ENCODE measurements at regions of chr17 and their contacts with region 1.

Region 1: DNA sequence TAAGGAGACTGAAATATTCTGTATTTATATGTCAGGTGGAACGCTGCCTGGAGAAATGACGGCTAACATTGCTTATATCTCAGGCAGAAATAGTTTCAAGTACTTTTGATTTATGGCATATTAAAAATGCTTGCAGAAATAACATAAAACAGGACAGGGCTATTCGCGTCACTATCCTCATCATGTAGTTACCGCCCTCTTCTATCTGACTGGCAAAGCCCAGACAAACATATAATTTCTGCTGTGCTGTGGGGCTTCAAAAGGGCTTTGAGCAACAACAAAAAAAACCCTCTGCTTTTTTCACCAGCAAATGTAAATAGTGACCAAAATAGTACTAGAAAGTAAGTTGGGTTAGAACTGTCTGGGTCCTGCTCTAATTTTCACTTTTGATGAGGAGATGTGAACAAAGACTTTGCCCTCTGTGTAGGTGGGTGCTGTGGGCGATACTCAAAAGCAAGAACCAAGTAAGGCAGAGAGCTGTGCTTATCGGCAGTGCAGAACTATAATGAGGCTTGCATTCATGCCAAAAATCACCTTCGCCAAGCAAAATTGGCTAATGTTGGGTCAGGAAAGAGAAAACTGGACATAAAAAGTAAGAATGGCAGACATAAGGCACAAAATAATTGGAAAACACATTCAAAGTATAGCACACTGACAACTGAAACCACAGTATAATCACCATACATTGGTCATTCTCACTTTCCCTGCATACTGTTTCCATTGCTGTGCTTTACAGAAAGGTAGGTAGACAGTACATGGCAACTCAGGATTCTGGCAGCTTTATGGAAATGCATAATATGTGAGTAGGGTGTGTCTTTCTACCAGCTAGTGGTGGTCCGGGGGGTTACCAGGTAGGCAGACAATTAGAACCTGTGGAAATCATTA is 151.2 kb upstream of the AXIN2 start:
- DNase-seq: peak; percentile 81
- H3K4me3 ChIP-seq: peak overlapping the region in 2 of 4 donors; percentile 12 to 25
- H3K27ac ChIP-seq: peak overlapping the region; percentile 56 to 84 (median 69)
- H3K4me1 ChIP-seq: peaks cover 0 to 26% (median 23%) of the 10 kb centered on the region in 4 donors
- H3K27me3 ChIP-seq: no peaks in the 10 kb centered on the region
- CTCF ChIP-seq: no peak
- EP300 ChIP-seq: peak; percentile 89 to 99 (median 94)
- POLR2A ChIP-seq: no peak

Region 2: GRCh38 chr17:65572581-65573281 is 139.9 kb before region 1 on chr17:
- intact Hi-C with region 1: no loop called
- DNase-seq: no peak
- H3K4me3 ChIP-seq: no peak overlapping the region
- H3K27ac ChIP-seq: no peak overlapping the region
- H3K4me1 ChIP-seq: no peaks in the 10 kb centered on the region
- H3K27me3 ChIP-seq: no peaks in the 10 kb centered on the region
- CTCF ChIP-seq: no peak
- EP300 ChIP-seq: no peak
- POLR2A ChIP-seq: no peak

Region 3: DNA sequence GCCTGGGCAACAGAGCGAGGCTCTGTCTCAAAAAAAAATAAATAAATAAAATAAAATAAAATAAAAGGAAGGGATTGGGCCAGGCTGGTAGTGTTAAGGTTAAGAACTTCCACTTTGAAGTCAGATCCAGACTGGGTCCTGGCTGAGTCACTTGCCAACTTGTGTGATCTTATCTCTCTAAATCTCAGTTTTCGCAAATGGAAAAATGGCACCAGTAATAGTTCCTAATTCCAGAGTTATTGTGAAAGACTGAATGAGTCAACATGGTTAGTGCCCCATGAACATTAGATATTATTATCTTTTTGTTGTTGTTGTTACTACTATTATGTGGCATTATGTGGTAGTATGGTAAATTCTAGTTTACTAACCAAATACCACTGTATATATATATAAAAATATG is 36.9 kb after region 1 on chr17:
- intact Hi-C with region 1: loop called (anchors 2 kb)
- DNase-seq: no peak
- H3K4me3 ChIP-seq: no peak overlapping the region
- H3K27ac ChIP-seq: no peak overlapping the region
- H3K4me1 ChIP-seq: peaks cover 0 to 23% (median 17%) of the 10 kb centered on the region in 4 donors
- H3K27me3 ChIP-seq: no peaks in the 10 kb centered on the region
- CTCF ChIP-seq: no peak
- EP300 ChIP-seq: no peak
- POLR2A ChIP-seq: no peak

Region 4: GRCh38 chr17:65785109-65785508 is 72.5 kb after region 1 on chr17:
- intact Hi-C with region 1: loop called (anchors 5 kb)
- DNase-seq: no peak
- H3K4me3 ChIP-seq: no peak overlapping the region
- H3K27ac ChIP-seq: peak overlapping the region; percentile 43 to 78 (median 60)
- H3K4me1 ChIP-seq: peaks cover 0 to 33% (median 26%) of the 10 kb centered on the region in 4 donors
- H3K27me3 ChIP-seq: no peaks in the 10 kb centered on the region
- CTCF ChIP-seq: no peak
- EP300 ChIP-seq: peak in 3 of 4 donors; percentile 18 to 69 (median 30)
- POLR2A ChIP-seq: no peak